ENCODE measurements at regions of chr1 and their contacts with region 1.

Region 1: GRCh38 chr1:221753828-221754188 is 11.9 kb upstream of the DUSP10 start:
- DNase-seq: no peak
- H3K4me3 Mint-ChIP-seq: no peak overlapping the region
- H3K27ac Mint-ChIP-seq: peak overlapping the region; percentile 82
- H3K4me1 Mint-ChIP-seq: peaks cover 37% of the 10 kb centered on the region
- H3K27me3 Mint-ChIP-seq: peaks cover 2% of the 10 kb centered on the region

Region 2: DNA sequence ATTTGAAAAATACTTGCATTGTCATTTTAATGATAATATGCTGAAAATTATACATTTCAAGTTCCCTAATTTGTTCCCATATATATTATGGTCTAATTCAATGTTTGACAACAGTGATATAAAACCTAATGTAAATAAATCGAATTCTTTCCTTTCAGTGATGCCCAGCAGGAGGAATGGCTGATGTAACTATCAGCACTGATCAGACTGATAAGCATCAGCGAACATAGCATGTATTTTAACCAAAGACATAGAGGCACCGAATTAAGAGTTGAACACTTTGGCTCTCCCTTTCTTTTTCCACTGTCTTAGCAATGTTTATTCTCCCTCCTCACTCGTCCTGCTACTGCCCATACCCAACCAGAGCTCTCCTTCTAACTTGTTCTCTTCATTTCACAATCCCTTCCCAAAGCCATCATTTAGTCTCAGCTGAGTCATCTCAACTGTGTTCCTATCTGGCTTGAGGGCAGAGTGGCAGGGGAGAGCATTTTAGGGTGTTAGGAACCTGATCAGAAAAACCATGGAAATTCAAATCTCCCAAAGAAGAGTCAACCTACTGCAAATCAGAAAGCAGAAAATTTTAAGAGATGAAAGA is 1122.5 kb before region 1 on chr1:
- CTCF ChIA-PET with region 1: no interaction called
- intact Hi-C with region 1: no loop called
- DNase-seq: no peak
- H3K4me3 Mint-ChIP-seq: no peak overlapping the region
- H3K27ac Mint-ChIP-seq: no peak overlapping the region
- H3K4me1 Mint-ChIP-seq: no peaks in the 10 kb centered on the region
- H3K27me3 Mint-ChIP-seq: peaks cover 2% of the 10 kb centered on the region

Region 3: DNA sequence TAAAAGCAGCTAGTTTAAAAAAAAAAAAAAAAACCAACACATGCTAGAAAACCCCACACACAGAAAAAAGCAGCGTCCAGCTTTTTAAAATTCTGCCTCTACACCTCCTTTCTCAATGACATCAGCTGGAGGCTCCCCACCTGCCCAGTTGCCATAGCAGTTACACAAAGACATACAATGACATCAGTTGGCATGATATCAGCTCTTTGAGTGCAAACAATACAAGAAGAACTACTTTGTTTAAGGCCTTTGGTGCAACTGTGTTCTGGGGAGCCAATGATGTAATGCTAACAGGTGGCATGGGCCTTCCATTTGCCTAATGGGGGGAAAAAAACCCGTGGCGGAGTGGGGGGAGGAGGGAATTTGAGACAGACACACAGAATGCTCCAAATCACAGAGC is 44.8 kb before region 1 on chr1:
- CTCF ChIA-PET with region 1: no interaction called
- intact Hi-C with region 1: loop called (anchors 1 kb)
- DNase-seq: peak; percentile 42
- H3K4me3 Mint-ChIP-seq: no peak overlapping the region
- H3K27ac Mint-ChIP-seq: no peak overlapping the region
- H3K4me1 Mint-ChIP-seq: peaks cover 53% of the 10 kb centered on the region
- H3K27me3 Mint-ChIP-seq: no peaks in the 10 kb centered on the region

Region 4: GRCh38 chr1:221725735-221726672 is 27.8 kb before region 1 on chr1:
- CTCF ChIA-PET with region 1: no interaction called
- intact Hi-C with region 1: loop called (anchors 1 kb)
- DNase-seq: no peak
- H3K4me3 Mint-ChIP-seq: peak overlapping the region; percentile 69
- H3K27ac Mint-ChIP-seq: peak overlapping the region; percentile 99
- H3K4me1 Mint-ChIP-seq: peaks cover 67% of the 10 kb centered on the region
- H3K27me3 Mint-ChIP-seq: no peaks in the 10 kb centered on the region

Region 5: DNA sequence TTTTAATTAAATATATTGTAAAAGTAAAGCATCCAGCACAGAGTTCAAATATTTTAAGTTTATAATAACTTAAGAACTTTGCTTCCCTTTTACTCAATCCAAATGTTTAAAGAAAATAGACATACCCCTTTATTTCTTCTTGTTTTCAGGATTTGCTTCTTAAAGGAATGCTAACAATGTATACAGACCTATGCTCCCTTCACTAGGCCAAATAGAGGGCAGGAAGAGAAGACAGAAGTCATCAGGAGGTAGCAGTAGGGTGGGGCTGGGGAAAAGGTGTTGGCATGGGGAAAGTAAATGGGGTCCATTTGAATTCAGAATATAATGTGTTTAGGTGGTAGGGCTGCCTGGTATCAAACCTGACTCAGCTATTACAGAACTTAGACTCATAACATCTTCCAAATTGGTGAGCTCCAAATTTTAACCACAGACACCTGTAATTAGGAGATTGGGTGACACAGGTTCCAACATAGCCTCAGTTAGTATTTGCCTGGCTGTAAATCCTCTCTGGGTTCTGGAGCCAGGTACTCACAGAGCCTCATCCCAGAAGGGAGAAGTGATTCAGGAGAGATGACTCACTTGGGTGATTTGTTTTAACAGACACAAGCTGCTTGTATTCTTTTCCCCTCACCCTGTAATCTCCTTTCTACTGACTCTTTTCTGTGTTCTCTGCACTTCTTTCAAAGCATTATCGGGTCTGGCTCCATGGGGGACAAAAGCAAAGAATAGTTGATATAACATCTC is 48.1 kb after region 1 on chr1:
- CTCF ChIA-PET with region 1: no interaction called
- intact Hi-C with region 1: loop called (anchors 1 kb)
- DNase-seq: peak; percentile 34
- H3K4me3 Mint-ChIP-seq: no peak overlapping the region
- H3K27ac Mint-ChIP-seq: no peak overlapping the region
- H3K4me1 Mint-ChIP-seq: peaks cover 28% of the 10 kb centered on the region
- H3K27me3 Mint-ChIP-seq: no peaks in the 10 kb centered on the region

Region 6: GRCh38 chr1:221824025-221824424 is 70.2 kb after region 1 on chr1:
- CTCF ChIA-PET with region 1: no interaction called
- intact Hi-C with region 1: loop called (anchors 1 kb)
- DNase-seq: peak; percentile 51
- H3K4me3 Mint-ChIP-seq: no peak overlapping the region
- H3K27ac Mint-ChIP-seq: peak overlapping the region; percentile 27
- H3K4me1 Mint-ChIP-seq: peaks cover 47% of the 10 kb centered on the region
- H3K27me3 Mint-ChIP-seq: peaks cover 4% of the 10 kb centered on the region

Region 7: GRCh38 chr1:221829327-221830015 is 75.7 kb after region 1 on chr1:
- CTCF ChIA-PET with region 1: no interaction called
- intact Hi-C with region 1: loop called (anchors 1 kb)
- DNase-seq: peak; percentile 83
- H3K4me3 Mint-ChIP-seq: peak overlapping the region; percentile 14
- H3K27ac Mint-ChIP-seq: peak overlapping the region; percentile 83
- H3K4me1 Mint-ChIP-seq: peaks cover 45% of the 10 kb centered on the region
- H3K27me3 Mint-ChIP-seq: no peaks in the 10 kb centered on the region

Region 8: DNA sequence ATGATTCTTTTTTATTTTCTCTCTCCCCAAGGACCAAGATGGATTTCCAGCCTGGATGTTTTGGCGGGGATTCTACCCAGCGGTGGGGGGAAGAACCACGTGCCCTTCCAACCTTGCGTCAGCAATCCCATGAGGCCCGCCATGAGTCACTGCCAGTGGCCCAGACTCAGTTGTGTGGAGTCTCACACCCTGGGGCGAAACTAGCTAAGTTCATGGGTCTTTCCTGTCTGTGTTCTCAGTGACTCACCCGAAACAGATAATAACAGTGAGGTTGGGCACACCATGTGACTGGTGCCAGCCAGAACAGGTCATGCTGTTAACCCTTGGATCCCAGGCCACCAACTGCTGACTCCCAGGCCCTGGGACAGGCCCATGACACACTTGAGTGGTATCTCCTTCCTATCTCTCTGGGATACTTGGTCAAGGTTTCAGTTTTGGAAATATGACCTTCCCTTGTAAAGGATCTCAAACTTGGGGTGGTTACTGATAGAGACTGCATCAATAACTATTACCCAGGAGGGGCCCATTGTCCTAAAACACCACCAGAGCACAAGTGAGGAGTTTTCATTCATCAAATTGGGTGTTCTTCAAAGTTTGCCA is 86.1 kb after region 1 on chr1:
- CTCF ChIA-PET with region 1: interaction called, 4 read pairs
- intact Hi-C with region 1: loop called (anchors 1 kb)
- DNase-seq: peak; percentile 87
- H3K4me3 Mint-ChIP-seq: no peak overlapping the region
- H3K27ac Mint-ChIP-seq: peak overlapping the region; percentile 9
- H3K4me1 Mint-ChIP-seq: peaks cover 35% of the 10 kb centered on the region
- H3K27me3 Mint-ChIP-seq: peaks cover 5% of the 10 kb centered on the region

Measured in activated naive CD4-positive, alpha-beta T cell treated with anti-CD3 and anti-CD28 coated beads for 36 hours (primary cell).